ENCODE measurements at regions of chr3 and their contacts with region 1.

Region 1: GRCh38 chr3:195259475-195260279 is 11.3 kb downstream of the XXYLT1 start:
- DNase-seq: peak; percentile 90
- ATAC-seq: peak; percentile 95
- H3K4me3 ChIP-seq: peak overlapping the region; percentile 58
- H3K27ac ChIP-seq: peak overlapping the region; percentile 87
- H3K4me1 ChIP-seq: peaks cover 16% of the 10 kb centered on the region
- H3K27me3 ChIP-seq: no peaks in the 10 kb centered on the region
- CTCF ChIP-seq: peak; percentile 94
- POLR2A ChIP-seq: peak; percentile 80
- RAD21 ChIP-seq: peak; percentile 85

Region 2: DNA sequence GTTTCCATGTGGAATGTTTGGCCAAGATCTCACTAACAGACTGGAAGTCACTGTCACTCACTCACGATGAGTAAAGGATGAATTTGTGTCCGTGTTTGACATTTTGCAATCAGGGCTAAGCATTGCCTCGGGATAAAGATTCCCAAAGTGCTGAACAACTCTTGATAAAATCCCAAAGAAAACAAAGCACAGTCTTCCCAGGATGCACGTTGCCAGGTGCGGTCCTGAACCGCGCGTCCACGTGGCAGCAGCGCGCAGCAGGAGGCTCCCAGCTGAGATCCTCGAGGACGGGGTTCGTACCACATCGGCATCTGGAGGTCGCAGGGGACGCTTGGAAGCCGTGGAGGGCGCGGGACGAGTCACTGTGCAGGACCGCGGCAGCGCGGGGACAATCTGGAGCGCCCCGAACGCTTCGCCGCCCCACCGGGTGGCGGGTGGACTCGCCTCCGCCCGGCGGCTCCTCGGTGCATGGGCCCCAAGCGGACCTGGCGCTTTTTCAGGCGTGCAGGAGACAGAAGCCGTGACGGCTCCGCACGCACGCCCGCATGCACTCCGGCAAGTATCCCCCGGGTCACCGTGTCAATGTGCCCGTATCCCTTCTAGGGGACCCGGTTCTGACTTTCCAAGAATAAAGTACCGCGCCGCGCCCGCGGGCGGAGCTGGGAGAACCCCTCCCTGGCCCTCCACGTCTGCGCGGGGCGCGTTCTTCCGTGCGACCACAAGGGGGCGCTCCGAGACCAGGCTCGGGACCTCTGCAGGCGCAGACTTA is 926.3 kb before region 1 on chr3:
- CTCF ChIA-PET with region 1: no interaction called
- POLR2A ChIA-PET with region 1: no interaction called
- dilution Hi-C with region 1: no loop called
- in situ Hi-C with region 1: no loop called
- intact Hi-C with region 1: loop called (anchors 5 kb)
- DNase-seq: peak; percentile 80
- ATAC-seq: peak; percentile 90
- H3K4me3 ChIP-seq: peak overlapping the region; percentile 53
- H3K27ac ChIP-seq: no peak overlapping the region
- H3K4me1 ChIP-seq: peaks cover 12% of the 10 kb centered on the region
- H3K27me3 ChIP-seq: no peaks in the 10 kb centered on the region; the same call in 1 of the 2 replicates
- CTCF ChIP-seq: peak; percentile 97
- POLR2A ChIP-seq: 0 out of 2 replicates have a peak, but pooled peaks have one; percentile 38
- RAD21 ChIP-seq: peak; percentile 100

Region 3: DNA sequence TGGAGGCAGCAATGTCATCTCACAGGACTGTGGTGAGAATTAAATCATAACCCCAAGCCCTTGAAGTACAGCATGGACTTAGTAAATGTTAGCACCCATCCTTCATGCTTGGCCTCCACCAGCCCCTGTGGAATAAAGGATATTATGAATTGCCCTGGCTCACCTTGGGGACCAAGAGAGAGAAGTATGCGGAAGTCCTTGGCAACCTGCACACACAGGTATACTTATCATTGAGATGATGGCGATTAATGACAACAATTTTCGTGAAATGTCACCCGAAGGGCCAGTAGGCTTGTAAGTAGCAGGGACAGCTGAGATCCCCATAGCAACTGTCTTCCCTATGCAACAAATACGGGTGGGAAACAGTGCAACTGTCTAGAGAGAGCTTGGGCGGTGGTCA is 472.0 kb before region 1 on chr3:
- CTCF ChIA-PET with region 1: no interaction called
- POLR2A ChIA-PET with region 1: no interaction called
- dilution Hi-C with region 1: no loop called
- in situ Hi-C with region 1: no loop called
- intact Hi-C with region 1: no loop called
- DNase-seq: no peak
- ATAC-seq: no peak
- H3K4me3 ChIP-seq: no peak overlapping the region
- H3K27ac ChIP-seq: no peak overlapping the region
- H3K4me1 ChIP-seq: no peaks in the 10 kb centered on the region
- H3K27me3 ChIP-seq: peaks cover 23% of the 10 kb centered on the region
- CTCF ChIP-seq: no peak
- POLR2A ChIP-seq: no peak
- RAD21 ChIP-seq: no peak

Region 4: DNA sequence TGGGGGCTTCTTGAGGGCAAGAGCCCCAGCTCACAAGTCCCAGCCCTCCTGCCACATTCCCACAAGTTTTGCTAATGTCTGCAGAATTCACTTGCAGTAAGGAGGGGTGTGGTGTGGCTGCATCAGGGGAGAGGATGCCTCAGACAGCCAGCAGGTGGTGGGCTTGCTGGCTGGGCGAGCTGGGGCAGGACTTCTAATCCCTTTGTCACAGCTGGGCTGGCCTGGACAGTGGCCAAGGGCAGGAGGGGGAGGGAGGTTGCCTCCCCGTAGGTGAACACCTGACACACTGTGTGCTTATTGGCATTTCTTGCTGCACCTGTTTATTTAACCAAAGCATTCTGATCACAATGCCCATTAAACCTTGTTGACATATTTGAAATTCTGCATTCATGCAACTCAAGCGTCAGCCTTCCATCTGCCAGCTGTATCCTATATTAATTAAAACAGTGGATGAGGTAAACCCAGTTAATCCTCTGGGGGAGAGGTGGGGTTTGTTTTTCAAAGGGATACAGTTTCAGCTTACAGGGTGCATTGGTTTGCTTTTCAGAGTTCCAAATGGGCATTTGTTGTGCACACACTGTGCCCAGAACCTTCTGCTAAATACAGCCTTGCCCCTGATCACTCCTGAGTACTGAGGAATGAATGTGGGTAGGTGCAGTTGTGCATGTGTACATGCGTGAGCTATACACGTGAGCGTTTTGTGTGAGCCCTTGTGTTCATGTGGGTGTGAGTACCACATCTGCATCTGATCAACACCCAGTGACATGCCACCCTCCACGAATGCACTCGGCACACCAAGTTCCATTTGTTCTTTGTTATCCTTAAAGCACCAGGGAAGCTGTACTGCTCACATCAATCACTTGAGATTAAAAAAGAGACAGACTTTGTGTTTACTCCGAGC is 257.5 kb before region 1 on chr3:
- CTCF ChIA-PET with region 1: no interaction called
- POLR2A ChIA-PET with region 1: no interaction called
- dilution Hi-C with region 1: no loop called
- in situ Hi-C with region 1: no loop called
- intact Hi-C with region 1: loop called (anchors 5 kb)
- DNase-seq: peak; percentile 34
- ATAC-seq: peak; percentile 53; the same call in 1 of the 2 replicates
- H3K4me3 ChIP-seq: no peak overlapping the region
- H3K27ac ChIP-seq: no peak overlapping the region; the same call in 1 of the 2 replicates
- H3K4me1 ChIP-seq: peaks cover 6% of the 10 kb centered on the region; the same call in 1 of the 2 replicates
- H3K27me3 ChIP-seq: peaks cover 76% of the 10 kb centered on the region
- CTCF ChIP-seq: peak; percentile 43
- POLR2A ChIP-seq: no peak
- RAD21 ChIP-seq: peak; percentile 47

Region 5: GRCh38 chr3:195117978-195118581 is 141.6 kb before region 1 on chr3:
- CTCF ChIA-PET with region 1: no interaction called
- POLR2A ChIA-PET with region 1: no interaction called
- dilution Hi-C with region 1: no loop called
- in situ Hi-C with region 1: loop called (anchors 10 kb)
- intact Hi-C with region 1: loop called (anchors 2 kb)
- DNase-seq: peak; percentile 25
- ATAC-seq: peak; percentile 10; the same call in 1 of the 2 replicates
- H3K4me3 ChIP-seq: no peak overlapping the region
- H3K27ac ChIP-seq: peak overlapping the region; percentile 48
- H3K4me1 ChIP-seq: peaks cover 16% of the 10 kb centered on the region
- H3K27me3 ChIP-seq: no peaks in the 10 kb centered on the region
- CTCF ChIP-seq: peak; percentile 38; the same call in 1 of the 2 replicates
- POLR2A ChIP-seq: no peak
- RAD21 ChIP-seq: 0 out of 2 replicates have a peak, but pooled peaks have one; percentile 15

Region 6: DNA sequence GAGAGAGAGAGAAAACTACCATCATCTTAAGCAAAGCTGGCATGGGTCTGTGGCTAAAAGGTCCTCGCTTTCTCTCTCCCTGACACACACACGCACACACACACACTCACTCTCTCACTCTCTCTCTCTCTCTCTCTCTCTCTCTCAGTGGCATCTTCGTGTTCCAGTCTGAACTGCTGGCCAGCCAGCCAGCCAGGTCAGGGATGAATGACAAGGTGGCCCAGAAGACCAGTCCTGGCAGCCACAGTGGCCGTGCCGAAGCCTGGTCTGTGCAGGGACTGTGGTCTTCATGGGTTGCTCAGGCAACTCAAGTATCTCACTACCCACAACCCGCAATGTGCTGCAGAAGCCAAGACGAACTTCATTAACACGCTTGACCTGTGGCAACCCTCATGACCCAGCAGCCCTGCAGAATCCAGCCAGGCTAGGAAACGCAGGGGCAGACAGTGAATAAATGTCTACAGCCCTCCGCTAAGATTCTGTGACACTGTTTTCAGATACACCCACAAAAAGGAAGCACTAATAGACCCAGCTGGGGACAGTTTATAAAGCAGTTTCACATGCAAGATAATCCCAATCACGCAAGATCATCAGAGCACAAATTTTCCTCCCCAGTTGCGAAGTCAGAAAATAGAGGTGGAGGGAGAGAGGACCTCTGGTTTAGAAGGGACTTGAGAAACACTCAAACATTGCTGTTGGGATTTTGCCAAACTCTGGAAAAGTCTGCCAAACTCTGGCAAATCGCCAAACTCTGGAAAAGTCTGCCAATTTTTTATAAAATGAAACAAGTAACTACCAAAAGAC is 55.1 kb before region 1 on chr3:
- CTCF ChIA-PET with region 1: no interaction called
- POLR2A ChIA-PET with region 1: no interaction called
- dilution Hi-C with region 1: no loop called
- in situ Hi-C with region 1: no loop called
- intact Hi-C with region 1: loop called (anchors 2 kb)
- DNase-seq: no peak
- ATAC-seq: peak; percentile 4; the same call in 1 of the 2 replicates
- H3K4me3 ChIP-seq: no peak overlapping the region
- H3K27ac ChIP-seq: peak overlapping the region; percentile 94
- H3K4me1 ChIP-seq: peaks cover 27% of the 10 kb centered on the region
- H3K27me3 ChIP-seq: no peaks in the 10 kb centered on the region
- CTCF ChIP-seq: no peak
- POLR2A ChIP-seq: no peak
- RAD21 ChIP-seq: no peak

Region 7: DNA sequence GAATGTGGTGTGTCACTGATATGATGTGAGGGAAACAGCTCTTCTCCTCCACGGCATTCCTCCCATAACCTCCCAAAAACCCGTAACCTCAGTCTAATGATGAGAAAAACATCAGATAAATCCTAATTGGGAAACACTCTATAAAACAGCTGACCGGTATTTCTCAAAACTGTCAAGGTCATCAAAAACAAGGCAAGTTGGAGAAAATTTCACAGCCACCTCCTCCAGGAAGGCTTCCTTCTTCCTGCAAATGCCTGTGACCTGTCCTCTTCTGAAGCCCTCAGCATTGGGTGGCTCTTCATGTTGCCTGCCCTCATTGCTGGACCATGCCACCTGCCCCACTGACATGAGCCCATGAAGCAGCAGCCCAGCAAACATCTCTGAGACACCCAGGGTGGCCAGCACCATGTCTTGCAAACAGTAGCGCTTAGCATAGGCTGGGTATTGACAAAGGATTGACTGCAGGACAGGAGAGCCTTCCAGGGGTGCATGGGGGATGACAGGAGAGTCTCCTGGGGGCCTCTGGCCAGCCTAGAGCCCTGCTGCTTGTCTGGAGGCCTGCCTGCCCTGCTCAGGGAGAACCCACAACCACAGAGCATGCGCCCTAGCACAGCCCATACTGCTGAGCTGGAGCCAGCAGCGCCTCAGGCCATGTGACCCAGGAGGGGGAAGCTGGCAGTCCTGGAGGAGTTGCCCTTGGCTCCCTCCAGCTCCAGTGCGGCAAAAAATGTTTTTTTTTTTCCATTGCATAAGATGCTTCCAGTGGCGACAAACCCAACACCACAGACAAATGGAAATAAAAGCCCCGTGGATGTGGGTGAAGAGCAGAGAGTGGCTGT is 38.4 kb before region 1 on chr3:
- CTCF ChIA-PET with region 1: no interaction called
- POLR2A ChIA-PET with region 1: no interaction called
- dilution Hi-C with region 1: no loop called
- in situ Hi-C with region 1: no loop called
- intact Hi-C with region 1: no loop called
- DNase-seq: peak; percentile 26
- ATAC-seq: peak; percentile 74
- H3K4me3 ChIP-seq: no peak overlapping the region
- H3K27ac ChIP-seq: no peak overlapping the region
- H3K4me1 ChIP-seq: peaks cover 10% of the 10 kb centered on the region
- H3K27me3 ChIP-seq: no peaks in the 10 kb centered on the region
- CTCF ChIP-seq: no peak
- POLR2A ChIP-seq: no peak
- RAD21 ChIP-seq: no peak

Region 8: GRCh38 chr3:195240171-195240748 is 19.4 kb before region 1 on chr3:
- CTCF ChIA-PET with region 1: no interaction called
- POLR2A ChIA-PET with region 1: no interaction called
- dilution Hi-C with region 1: no loop called
- in situ Hi-C with region 1: no loop called
- intact Hi-C with region 1: no loop called
- DNase-seq: no peak
- ATAC-seq: no peak
- H3K4me3 ChIP-seq: no peak overlapping the region
- H3K27ac ChIP-seq: no peak overlapping the region
- H3K4me1 ChIP-seq: no peaks in the 10 kb centered on the region; the same call in 1 of the 2 replicates
- H3K27me3 ChIP-seq: no peaks in the 10 kb centered on the region
- CTCF ChIP-seq: no peak
- POLR2A ChIP-seq: no peak
- RAD21 ChIP-seq: no peak

Measured in IMR-90 (cell line).